MCF 10A (cell line): ENCODE measurements at regions of chr5 and their contacts with region 1.

Region 1: GRCh38 chr5:156475182-156476157 is 148.5 kb downstream of the SGCD start:
- DNase-seq: peak; percentile 94
- H3K4me3 Mint-ChIP-seq: peak overlapping the region; percentile 13
- H3K27ac Mint-ChIP-seq: peak overlapping the region; percentile 84
- H3K4me1 Mint-ChIP-seq: peaks cover 59% of the 10 kb centered on the region
- H3K27me3 Mint-ChIP-seq: no peaks in the 10 kb centered on the region
- CTCF ChIP-seq: no peak

Region 2: GRCh38 chr5:156137071-156137869 is 338.2 kb before region 1 on chr5:
- CTCF ChIA-PET with region 1: no interaction called
- POLR2A ChIA-PET with region 1: no interaction called
- intact Hi-C with region 1: loop called (anchors 10 kb)
- DNase-seq: no peak
- H3K4me3 Mint-ChIP-seq: no peak overlapping the region
- H3K27ac Mint-ChIP-seq: peak overlapping the region; percentile 68
- H3K4me1 Mint-ChIP-seq: no peaks in the 10 kb centered on the region
- H3K27me3 Mint-ChIP-seq: no peaks in the 10 kb centered on the region
- CTCF ChIP-seq: no peak

Region 3: GRCh38 chr5:156383510-156384265 is 91.8 kb before region 1 on chr5:
- CTCF ChIA-PET with region 1: interaction called, 3 read pairs
- POLR2A ChIA-PET with region 1: interaction called, 3 read pairs
- intact Hi-C with region 1: loop called (anchors 5 kb)
- DNase-seq: peak; percentile 55
- H3K4me3 Mint-ChIP-seq: no peak overlapping the region
- H3K27ac Mint-ChIP-seq: peak overlapping the region; percentile 26
- H3K4me1 Mint-ChIP-seq: peaks cover 31% of the 10 kb centered on the region
- H3K27me3 Mint-ChIP-seq: no peaks in the 10 kb centered on the region
- CTCF ChIP-seq: no peak

Region 4: GRCh38 chr5:156394642-156395305 is 80.7 kb before region 1 on chr5:
- CTCF ChIA-PET with region 1: interaction called, 5 read pairs
- POLR2A ChIA-PET with region 1: interaction called, 11 read pairs
- intact Hi-C with region 1: loop called (anchors 2 kb)
- DNase-seq: peak; percentile 79
- H3K4me3 Mint-ChIP-seq: no peak overlapping the region
- H3K27ac Mint-ChIP-seq: no peak overlapping the region
- H3K4me1 Mint-ChIP-seq: peaks cover 54% of the 10 kb centered on the region
- H3K27me3 Mint-ChIP-seq: no peaks in the 10 kb centered on the region
- CTCF ChIP-seq: no peak

Region 5: GRCh38 chr5:156815988-156816599 is 340.6 kb after region 1 on chr5:
- CTCF ChIA-PET with region 1: no interaction called
- POLR2A ChIA-PET with region 1: no interaction called
- intact Hi-C with region 1: loop called (anchors 1 kb)
- DNase-seq: peak; percentile 8
- H3K4me3 Mint-ChIP-seq: no peak overlapping the region
- H3K27ac Mint-ChIP-seq: no peak overlapping the region
- H3K4me1 Mint-ChIP-seq: no peaks in the 10 kb centered on the region
- H3K27me3 Mint-ChIP-seq: no peaks in the 10 kb centered on the region
- CTCF ChIP-seq: peak; percentile 69